ENCODE measurements at regions of chr14 and their contacts with region 1.

Region 1: GRCh38 chr14:57871459-57872080 is 5.7 kb upstream of the SLC35F4 start:
- DNase-seq: peak; percentile 33
- H3K4me3 ChIP-seq: no peak overlapping the region
- H3K27ac ChIP-seq: no peak overlapping the region
- H3K4me1 ChIP-seq: no peaks in the 10 kb centered on the region
- H3K27me3 ChIP-seq: peaks cover 5% of the 10 kb centered on the region
- CTCF ChIP-seq: peak; percentile 72 to 86

Region 2: DNA sequence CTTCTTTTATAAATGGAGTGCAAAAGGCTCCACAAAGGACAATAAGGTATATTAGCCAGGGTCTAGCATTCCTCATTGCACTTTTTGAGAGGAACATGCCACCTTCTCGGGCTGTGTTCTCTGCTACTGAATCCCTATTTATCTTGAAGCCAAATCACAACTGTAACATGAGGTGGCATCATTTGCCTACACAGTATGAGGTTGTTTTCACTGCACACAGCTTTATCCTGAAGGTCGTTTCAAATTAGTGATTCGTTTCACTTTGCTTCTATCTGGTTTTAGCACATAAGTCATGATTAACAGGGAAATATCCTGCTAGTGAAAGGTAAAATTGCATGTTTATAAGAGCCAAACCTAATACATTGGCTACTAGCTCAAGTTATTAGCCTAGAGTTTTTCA is 159.5 kb before region 1 on chr14:
- CTCF ChIA-PET with region 1: interaction called, 3 read pairs
- dilution Hi-C with region 1: no loop called
- in situ Hi-C with region 1: no loop called
- intact Hi-C with region 1: loop called (anchors 1 kb)
- DNase-seq: no peak
- H3K4me3 ChIP-seq: no peak overlapping the region
- H3K27ac ChIP-seq: no peak overlapping the region
- H3K4me1 ChIP-seq: peaks cover 4% of the 10 kb centered on the region
- H3K27me3 ChIP-seq: no peaks in the 10 kb centered on the region
- CTCF ChIP-seq: peak in 1 of 2 donors; percentile 50

Region 3: GRCh38 chr14:57854571-57854970 is 17.0 kb before region 1 on chr14:
- CTCF ChIA-PET with region 1: no interaction called
- dilution Hi-C with region 1: no loop called
- in situ Hi-C with region 1: no loop called
- intact Hi-C with region 1: no loop called
- DNase-seq: no peak
- H3K4me3 ChIP-seq: no peak overlapping the region
- H3K27ac ChIP-seq: no peak overlapping the region
- H3K4me1 ChIP-seq: no peaks in the 10 kb centered on the region
- H3K27me3 ChIP-seq: no peaks in the 10 kb centered on the region
- CTCF ChIP-seq: no peak